ENCODE measurements at regions of chr22 and their contacts with region 1.

Region 1: GRCh38 chr22:41543854-41544670 is at the start of gene POLR3H:
- DNase-seq: peak; percentile 97
- H3K4me3 Mint-ChIP-seq: peak within 1 kb of the TSS; percentile 96
- H3K27ac Mint-ChIP-seq: peak within 1 kb of the TSS; percentile 89
- H3K4me1 Mint-ChIP-seq: peaks cover 28% of the 10 kb centered on the region
- H3K27me3 Mint-ChIP-seq: no peaks in the 10 kb centered on the region
- CTCF ChIP-seq: peak; percentile 27
- total RNA-seq, gene POLR3H: 26.3 and 35.5 TPM in 2 replicates

Region 2: GRCh38 chr22:41479671-41480396 is 64.2 kb before region 1 on chr22:
- CTCF ChIA-PET with region 1: no interaction called
- POLR2A ChIA-PET with region 1: no interaction called
- intact Hi-C with region 1: no loop called
- DNase-seq: peak; percentile 12
- H3K4me3 Mint-ChIP-seq: no peak overlapping the region
- H3K27ac Mint-ChIP-seq: peak overlapping the region; percentile 37
- H3K4me1 Mint-ChIP-seq: peaks cover 25% of the 10 kb centered on the region
- H3K27me3 Mint-ChIP-seq: no peaks in the 10 kb centered on the region
- CTCF ChIP-seq: no peak

Region 3: GRCh38 chr22:41501209-41501608 is 42.9 kb before region 1 on chr22:
- CTCF ChIA-PET with region 1: no interaction called
- POLR2A ChIA-PET with region 1: no interaction called
- intact Hi-C with region 1: no loop called
- DNase-seq: peak; percentile 41
- H3K4me3 Mint-ChIP-seq: no peak overlapping the region
- H3K27ac Mint-ChIP-seq: no peak overlapping the region
- H3K4me1 Mint-ChIP-seq: peaks cover 8% of the 10 kb centered on the region
- H3K27me3 Mint-ChIP-seq: no peaks in the 10 kb centered on the region
- CTCF ChIP-seq: peak; percentile 24

Region 4: GRCh38 chr22:41589391-41590241 is 45.6 kb after region 1 on chr22 and contains the start of gene PMM1:
- CTCF ChIA-PET with region 1: interaction called, 5 read pairs
- POLR2A ChIA-PET with region 1: interaction called, 18 read pairs
- intact Hi-C with region 1: no loop called
- DNase-seq: peak; percentile 100
- H3K4me3 Mint-ChIP-seq: peak within 1 kb of the TSS; percentile 88
- H3K27ac Mint-ChIP-seq: peak within 1 kb of the TSS; percentile 86
- H3K4me1 Mint-ChIP-seq: peaks cover 4% of the 10 kb centered on the region
- H3K27me3 Mint-ChIP-seq: no peaks in the 10 kb centered on the region
- CTCF ChIP-seq: no peak
- total RNA-seq, gene PMM1: 29.9 and 30.9 TPM in 2 replicates

Region 5: GRCh38 chr22:41596776-41597634 is 52.9 kb after region 1 on chr22:
- CTCF ChIA-PET with region 1: interaction called, 4 read pairs
- POLR2A ChIA-PET with region 1: interaction called, 9 read pairs
- intact Hi-C with region 1: loop called (anchors 1 kb)
- DNase-seq: peak; percentile 58
- H3K4me3 Mint-ChIP-seq: no peak overlapping the region
- H3K27ac Mint-ChIP-seq: peak overlapping the region; percentile 59
- H3K4me1 Mint-ChIP-seq: peaks cover 14% of the 10 kb centered on the region
- H3K27me3 Mint-ChIP-seq: no peaks in the 10 kb centered on the region
- CTCF ChIP-seq: peak; percentile 65

Region 6: GRCh38 chr22:41946629-41947423 is 402.8 kb after region 1 on chr22 and contains the start of gene CENPM:
- CTCF ChIA-PET with region 1: no interaction called
- POLR2A ChIA-PET with region 1: no interaction called
- intact Hi-C with region 1: loop called (anchors 10 kb)
- DNase-seq: peak; percentile 96
- H3K4me3 Mint-ChIP-seq: peak within 1 kb of the TSS; percentile 84
- H3K27ac Mint-ChIP-seq: peak within 1 kb of the TSS; percentile 81
- H3K4me1 Mint-ChIP-seq: peaks cover 12% of the 10 kb centered on the region
- H3K27me3 Mint-ChIP-seq: no peaks in the 10 kb centered on the region
- CTCF ChIP-seq: no peak
- total RNA-seq, gene CENPM: 9.1 and 21.1 TPM in 2 replicates

Measured in MCF 10A (cell line).